ENCODE measurements at regions of chr12 and their contacts with region 1.

Region 1: GRCh38 chr12:130916251-130916911 is 37.3 kb upstream of the ADGRD1 start:
- DNase-seq: peak; percentile 42
- ATAC-seq: peak; percentile 77
- H3K4me3 ChIP-seq: no peak overlapping the region
- H3K27ac ChIP-seq: no peak overlapping the region
- H3K4me1 ChIP-seq: peaks cover 25% of the 10 kb centered on the region
- H3K27me3 ChIP-seq: 0 out of 5 replicates have a peak, but pooled peaks cover 0 to 1% of the 10 kb centered on the region in 2 experiments
- CTCF ChIP-seq: peak; percentile 96
- EP300 ChIP-seq: no peak
- POLR2A ChIP-seq: no peak
- RAD21 ChIP-seq: peak; percentile 98

Region 2: GRCh38 chr12:130617219-130617618 is 299.2 kb before region 1 on chr12:
- CTCF ChIA-PET with region 1: no interaction called
- POLR2A ChIA-PET with region 1: no interaction called
- in situ Hi-C with region 1: no loop called
- intact Hi-C with region 1: no loop called
- DNase-seq: no peak
- ATAC-seq: no peak; the same call in 2 of the 3 replicates
- H3K4me3 ChIP-seq: no peak overlapping the region
- H3K27ac ChIP-seq: no peak overlapping the region
- H3K4me1 ChIP-seq: no peaks in the 10 kb centered on the region
- H3K27me3 ChIP-seq: peaks cover 3 to 52% of the 10 kb centered on the region in 2 experiments; a peak in 4 of 5 replicates
- CTCF ChIP-seq: no peak
- EP300 ChIP-seq: no peak
- POLR2A ChIP-seq: no peak
- RAD21 ChIP-seq: no peak

Region 3: GRCh38 chr12:130980939-130981742 is 64.8 kb after region 1 on chr12:
- CTCF ChIA-PET with region 1: no interaction called
- POLR2A ChIA-PET with region 1: interaction called, 3 read pairs
- in situ Hi-C with region 1: no loop called
- intact Hi-C with region 1: loop called (anchors 5 kb)
- DNase-seq: no peak
- ATAC-seq: no peak
- H3K4me3 ChIP-seq: no peak overlapping the region
- H3K27ac ChIP-seq: no peak overlapping the region
- H3K4me1 ChIP-seq: peaks cover 76% of the 10 kb centered on the region
- H3K27me3 ChIP-seq: no peaks in the 10 kb centered on the region
- CTCF ChIP-seq: no peak
- EP300 ChIP-seq: no peak
- POLR2A ChIP-seq: no peak
- RAD21 ChIP-seq: no peak

Region 4: GRCh38 chr12:131018808-131019397 is 102.5 kb after region 1 on chr12:
- CTCF ChIA-PET with region 1: interaction called, 9 read pairs
- POLR2A ChIA-PET with region 1: no interaction called
- in situ Hi-C with region 1: no loop called
- intact Hi-C with region 1: loop called (anchors 1 kb)
- DNase-seq: no peak
- ATAC-seq: peak; percentile 78
- H3K4me3 ChIP-seq: no peak overlapping the region
- H3K27ac ChIP-seq: no peak overlapping the region
- H3K4me1 ChIP-seq: peaks cover 37% of the 10 kb centered on the region
- H3K27me3 ChIP-seq: peaks cover 0 to 1% of the 10 kb centered on the region in 2 experiments; a peak in 1 of 5 replicates
- CTCF ChIP-seq: peak; percentile 70
- EP300 ChIP-seq: no peak
- POLR2A ChIP-seq: no peak
- RAD21 ChIP-seq: peak; percentile 75

Region 5: DNA sequence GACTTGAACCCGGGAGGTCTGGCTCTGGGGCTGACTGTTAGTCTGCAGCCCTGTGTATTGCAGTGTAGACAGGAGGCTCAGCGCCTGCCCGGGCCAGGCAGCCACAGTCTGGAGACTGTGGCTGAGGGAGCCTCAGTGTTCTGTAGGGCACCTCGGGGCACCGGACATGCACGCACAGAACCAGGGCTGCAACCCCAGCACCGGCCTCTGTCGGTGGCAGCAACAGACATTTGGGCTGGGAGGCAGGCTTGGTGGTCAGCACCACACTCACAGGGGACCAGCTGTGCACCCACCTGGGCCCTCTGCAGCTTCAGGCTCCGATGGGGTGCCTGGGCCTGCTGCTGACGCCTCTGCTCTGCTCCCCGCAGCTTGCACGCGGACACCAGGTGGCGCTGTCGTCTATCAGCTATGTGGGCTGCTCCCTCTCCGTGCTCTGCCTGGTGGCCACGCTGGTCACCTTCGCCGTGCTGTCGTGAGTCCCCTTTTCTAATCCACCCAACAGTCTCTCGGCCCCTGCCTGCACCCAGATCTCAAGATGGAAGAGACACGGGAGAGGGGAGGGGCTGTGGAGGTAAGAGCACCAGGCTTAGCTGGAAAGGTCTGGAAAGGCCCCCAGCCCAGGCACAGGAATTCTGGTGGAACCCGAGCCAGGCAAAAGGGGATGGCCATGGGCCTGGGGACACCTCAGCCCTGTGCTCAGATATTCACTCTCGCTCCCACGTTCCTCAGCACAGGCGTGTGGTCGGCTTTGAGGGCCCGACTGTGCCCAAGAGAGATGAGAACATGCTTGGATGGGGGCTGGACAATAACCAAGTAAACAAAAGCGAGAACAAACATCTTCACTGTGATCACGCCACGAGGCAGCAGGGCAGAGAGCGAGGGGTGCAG is 188.3 kb after region 1 on chr12:
- CTCF ChIA-PET with region 1: interaction called, 13 read pairs
- POLR2A ChIA-PET with region 1: no interaction called
- in situ Hi-C with region 1: no loop called
- intact Hi-C with region 1: no loop called
- DNase-seq: peak; percentile 50
- ATAC-seq: peak; percentile 99
- H3K4me3 ChIP-seq: peak overlapping the region in 1 of 3 experiments; percentile 11; a peak in 1 of 6 replicates
- H3K27ac ChIP-seq: no peak overlapping the region
- H3K4me1 ChIP-seq: peaks cover 6% of the 10 kb centered on the region; the same call in 1 of the 2 replicates
- H3K27me3 ChIP-seq: peaks cover 0 to 1% of the 10 kb centered on the region in 2 experiments; a peak in 1 of 5 replicates
- CTCF ChIP-seq: peak; percentile 98
- EP300 ChIP-seq: no peak
- POLR2A ChIP-seq: no peak
- RAD21 ChIP-seq: peak; percentile 92

Region 6: GRCh38 chr12:131132118-131132892 is 215.9 kb after region 1 on chr12:
- CTCF ChIA-PET with region 1: interaction called, 43 read pairs
- POLR2A ChIA-PET with region 1: interaction called, 3 read pairs
- in situ Hi-C with region 1: loop called (anchors 5 kb)
- intact Hi-C with region 1: loop called (anchors 1 kb)
- DNase-seq: peak; percentile 53
- ATAC-seq: peak; percentile 88
- H3K4me3 ChIP-seq: no peak overlapping the region
- H3K27ac ChIP-seq: no peak overlapping the region
- H3K4me1 ChIP-seq: no peaks in the 10 kb centered on the region
- H3K27me3 ChIP-seq: no peaks in the 10 kb centered on the region; a peak in 1 of 5 replicates
- CTCF ChIP-seq: peak; percentile 93
- EP300 ChIP-seq: no peak
- POLR2A ChIP-seq: no peak
- RAD21 ChIP-seq: peak; percentile 82

Region 7: GRCh38 chr12:131137836-131138637 is 221.7 kb after region 1 on chr12:
- CTCF ChIA-PET with region 1: interaction called, 43 read pairs
- POLR2A ChIA-PET with region 1: interaction called, 3 read pairs
- in situ Hi-C with region 1: loop called (anchors 5 kb)
- intact Hi-C with region 1: no loop called
- DNase-seq: no peak
- ATAC-seq: no peak
- H3K4me3 ChIP-seq: no peak overlapping the region
- H3K27ac ChIP-seq: no peak overlapping the region
- H3K4me1 ChIP-seq: no peaks in the 10 kb centered on the region
- H3K27me3 ChIP-seq: no peaks in the 10 kb centered on the region
- CTCF ChIP-seq: 0 out of 2 replicates have a peak, but pooled peaks have one; percentile 4
- EP300 ChIP-seq: no peak
- POLR2A ChIP-seq: no peak
- RAD21 ChIP-seq: no peak

Region 8: DNA sequence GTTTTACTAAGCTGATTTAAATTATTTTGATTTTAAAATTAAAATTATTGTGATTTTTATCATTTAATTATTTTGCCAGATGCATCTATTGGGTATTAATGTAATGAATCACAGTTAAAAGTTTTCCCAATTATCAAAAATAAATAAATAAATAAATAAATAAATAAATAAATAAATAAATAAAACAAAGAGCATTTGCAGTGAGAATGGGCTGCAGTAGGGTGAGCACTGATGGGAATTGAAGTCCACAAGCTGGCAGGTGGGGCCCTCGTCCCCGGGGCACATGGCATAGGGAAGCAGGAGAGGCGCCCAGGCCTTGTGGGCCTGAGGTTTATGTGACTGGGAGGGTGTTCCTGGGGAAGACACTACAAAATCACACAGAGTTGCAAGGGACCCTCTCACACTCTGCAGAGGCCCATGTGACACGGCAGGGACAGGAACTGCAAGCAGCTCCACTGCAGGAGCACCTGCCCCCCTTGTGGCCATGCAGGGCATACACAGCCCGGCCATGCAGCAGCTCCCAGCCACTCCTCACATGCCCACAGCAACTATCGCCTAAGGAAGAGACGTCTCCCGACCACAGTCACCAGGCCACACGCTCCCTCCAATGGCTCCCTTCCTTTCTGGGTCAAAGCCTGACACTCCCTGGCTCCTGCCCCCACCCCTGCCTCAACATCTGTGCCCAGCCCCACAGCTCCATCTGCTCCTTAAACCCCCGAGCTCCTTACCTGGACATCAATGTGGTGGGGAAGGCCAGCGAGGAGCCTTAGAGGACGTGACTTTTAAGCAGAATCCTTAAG is 538.2 kb after region 1 on chr12:
- CTCF ChIA-PET with region 1: interaction called, 6 read pairs
- POLR2A ChIA-PET with region 1: interaction called, 4 read pairs
- in situ Hi-C with region 1: loop called (anchors 25 kb)
- intact Hi-C with region 1: no loop called
- DNase-seq: peak; percentile 60
- ATAC-seq: peak; percentile 100
- H3K4me3 ChIP-seq: no peak overlapping the region
- H3K27ac ChIP-seq: no peak overlapping the region
- H3K4me1 ChIP-seq: no peaks in the 10 kb centered on the region
- H3K27me3 ChIP-seq: peaks cover 4 to 28% of the 10 kb centered on the region in 2 experiments; a peak in 3 of 5 replicates
- CTCF ChIP-seq: peak; percentile 80
- EP300 ChIP-seq: peak in 1 of 2 experiments; percentile 52; a peak in 1 of 4 replicates
- POLR2A ChIP-seq: no peak
- RAD21 ChIP-seq: peak; percentile 73

Measured in HepG2 (cell line).